AG04450 (cell line): ENCODE measurements at regions of chr17 and their contacts with region 1.

Region 1: GRCh38 chr17:81601525-81602120 is 35.3 kb downstream of the NPLOC4 start:
- DNase-seq: peak; percentile 38
- H3K4me3 ChIP-seq: no peak overlapping the region
- H3K27ac ChIP-seq: no peak overlapping the region
- H3K27me3 ChIP-seq: no peaks in the 10 kb centered on the region
- CTCF ChIP-seq: peak; percentile 91

Region 2: DNA sequence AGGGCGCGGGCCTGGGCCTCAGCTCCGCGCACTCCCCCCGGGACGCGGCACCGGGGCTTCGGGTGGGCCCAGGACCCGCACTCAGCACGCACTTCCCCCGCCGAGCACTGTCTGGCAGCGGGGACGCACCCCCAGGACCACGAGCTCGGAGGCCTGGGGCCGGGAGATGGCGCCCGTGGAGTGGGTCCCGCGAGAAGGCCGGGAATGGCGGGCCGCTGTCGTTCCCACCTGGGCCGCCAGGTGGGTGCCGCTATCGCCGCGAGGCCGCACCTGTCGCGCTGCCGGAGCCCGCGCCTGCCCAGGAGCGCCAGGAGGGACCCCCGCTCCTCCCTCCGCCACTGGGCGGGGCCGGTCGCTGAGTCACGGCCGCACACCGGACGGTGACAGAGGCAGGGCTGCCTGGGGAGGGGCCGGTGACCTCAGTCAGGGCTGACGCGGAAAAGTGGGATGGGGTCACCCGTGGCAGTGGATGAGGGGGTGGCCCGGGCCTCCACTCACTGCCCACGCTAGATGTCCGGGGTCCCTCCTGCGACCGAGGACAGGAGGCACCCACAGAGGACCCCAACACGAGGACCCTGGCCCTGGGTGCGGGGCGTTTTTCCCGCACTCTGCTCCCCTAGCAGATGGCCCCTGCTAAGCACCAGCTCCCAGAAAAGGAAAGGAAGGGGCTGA is 82.2 kb before region 1 on chr17:
- CTCF ChIA-PET with region 1: interaction called, 19 read pairs
- POLR2A ChIA-PET with region 1: no interaction called
- DNase-seq: no peak
- H3K4me3 ChIP-seq: peak overlapping the region; percentile 51
- H3K27ac ChIP-seq: no peak overlapping the region
- H3K27me3 ChIP-seq: peaks cover 2% of the 10 kb centered on the region
- CTCF ChIP-seq: peak; percentile 12; the same call in 1 of the 2 replicates

Region 3: GRCh38 chr17:81576621-81577277 is 24.9 kb before region 1 on chr17:
- CTCF ChIA-PET with region 1: interaction called, 17 read pairs
- POLR2A ChIA-PET with region 1: interaction called, 9 read pairs
- DNase-seq: no peak
- H3K4me3 ChIP-seq: peak overlapping the region; percentile 20; the same call in 1 of the 2 replicates
- H3K27ac ChIP-seq: peak overlapping the region; percentile 90
- H3K27me3 ChIP-seq: no peaks in the 10 kb centered on the region
- CTCF ChIP-seq: 0 out of 2 replicates have a peak, but pooled peaks have one; percentile 9

Region 4: GRCh38 chr17:81612172-81612970 is 10.7 kb after region 1 on chr17:
- CTCF ChIA-PET with region 1: interaction called, 13 read pairs
- POLR2A ChIA-PET with region 1: no interaction called
- DNase-seq: no peak
- H3K4me3 ChIP-seq: no peak overlapping the region
- H3K27ac ChIP-seq: no peak overlapping the region
- H3K27me3 ChIP-seq: no peaks in the 10 kb centered on the region
- CTCF ChIP-seq: no peak

Region 5: GRCh38 chr17:81631482-81631881 is 29.9 kb after region 1 on chr17:
- CTCF ChIA-PET with region 1: interaction called, 12 read pairs
- POLR2A ChIA-PET with region 1: interaction called, 11 read pairs
- DNase-seq: no peak
- H3K4me3 ChIP-seq: no peak overlapping the region
- H3K27ac ChIP-seq: no peak overlapping the region
- H3K27me3 ChIP-seq: no peaks in the 10 kb centered on the region
- CTCF ChIP-seq: no peak